Activated CD8-positive, alpha-beta T cell treated with anti-CD3 and anti-CD28 coated beads for 36 hours (primary cell): ENCODE measurements at regions of chr12 and their contacts with region 1.

Region 1: DNA sequence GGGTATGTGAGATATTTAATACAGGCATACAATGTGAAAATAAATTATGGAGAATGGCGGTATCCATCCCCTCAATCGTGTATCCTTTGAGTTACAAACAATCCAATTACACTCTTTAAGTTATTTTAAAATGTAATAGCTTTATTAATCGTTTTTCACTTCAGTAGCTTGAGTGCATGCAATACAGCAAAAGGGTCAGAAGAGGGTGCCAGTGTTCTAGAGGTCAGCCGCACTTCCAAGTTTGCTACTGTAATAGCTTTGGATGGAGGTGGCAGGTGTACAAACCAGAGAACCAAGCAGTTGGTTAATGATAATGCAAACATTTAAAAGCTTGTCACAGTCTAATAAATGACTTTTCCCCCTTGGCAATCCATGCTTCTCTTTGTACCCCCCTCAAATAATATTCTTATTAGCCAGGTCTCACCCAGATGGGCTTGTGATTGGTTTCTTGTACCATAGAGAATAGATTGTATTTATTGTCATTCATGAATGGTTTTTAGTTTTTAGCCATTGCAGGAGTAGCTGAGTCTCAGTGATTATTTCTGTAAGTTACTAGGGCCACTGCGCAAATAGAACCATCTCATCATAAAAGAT is 127.0 kb downstream of the ERC1 start:
- DNase-seq: peak; percentile 87
- ATAC-seq: peak; percentile 77
- H3K4me3 Mint-ChIP-seq: no peak overlapping the region
- H3K27ac Mint-ChIP-seq: no peak overlapping the region
- H3K4me1 Mint-ChIP-seq: peaks cover 19% of the 10 kb centered on the region
- H3K27me3 Mint-ChIP-seq: no peaks in the 10 kb centered on the region
- CTCF ChIP-seq: peak; percentile 97

Region 2: GRCh38 chr12:203462-204260 is 914.4 kb before region 1 on chr12:
- CTCF ChIA-PET with region 1: no interaction called
- POLR2A ChIA-PET with region 1: no interaction called
- intact Hi-C with region 1: no loop called
- DNase-seq: no peak
- ATAC-seq: no peak
- H3K4me3 Mint-ChIP-seq: no peak overlapping the region
- H3K27ac Mint-ChIP-seq: no peak overlapping the region
- H3K4me1 Mint-ChIP-seq: no peaks in the 10 kb centered on the region
- H3K27me3 Mint-ChIP-seq: peaks cover 35% of the 10 kb centered on the region
- CTCF ChIP-seq: no peak

Region 3: GRCh38 chr12:913919-914708 is 204.0 kb before region 1 on chr12:
- CTCF ChIA-PET with region 1: no interaction called
- POLR2A ChIA-PET with region 1: no interaction called
- intact Hi-C with region 1: no loop called
- DNase-seq: no peak
- ATAC-seq: no peak
- H3K4me3 Mint-ChIP-seq: no peak overlapping the region
- H3K27ac Mint-ChIP-seq: no peak overlapping the region
- H3K4me1 Mint-ChIP-seq: peaks cover 11% of the 10 kb centered on the region
- H3K27me3 Mint-ChIP-seq: no peaks in the 10 kb centered on the region
- CTCF ChIP-seq: no peak

Region 4: DNA sequence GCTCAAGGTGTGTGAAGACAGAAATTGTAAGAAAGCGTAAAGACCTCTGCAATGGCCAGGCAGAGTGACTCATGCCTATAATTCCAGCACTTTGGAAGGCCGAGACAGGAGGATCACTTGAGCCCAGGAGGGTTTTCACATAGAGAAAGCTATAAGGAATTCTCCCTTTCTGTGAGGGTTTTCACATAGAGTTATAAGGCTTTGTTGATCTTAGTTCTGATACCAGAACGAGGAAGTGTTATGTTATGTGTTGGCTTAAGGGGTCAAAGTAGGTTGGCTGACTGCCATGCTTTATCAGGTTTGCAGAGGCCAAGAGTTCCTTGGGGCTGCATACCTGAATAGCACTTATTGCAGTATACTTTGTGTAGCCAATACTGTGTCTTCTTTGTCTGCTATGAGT is 12.1 kb after region 1 on chr12:
- CTCF ChIA-PET with region 1: interaction called, 68 read pairs
- POLR2A ChIA-PET with region 1: no interaction called
- intact Hi-C with region 1: no loop called
- DNase-seq: peak; percentile 22
- ATAC-seq: peak; percentile 34
- H3K4me3 Mint-ChIP-seq: no peak overlapping the region
- H3K27ac Mint-ChIP-seq: no peak overlapping the region
- H3K4me1 Mint-ChIP-seq: peaks cover 39% of the 10 kb centered on the region
- H3K27me3 Mint-ChIP-seq: no peaks in the 10 kb centered on the region
- CTCF ChIP-seq: no peak

Region 5: GRCh38 chr12:1184402-1184801 is 66.3 kb after region 1 on chr12:
- CTCF ChIA-PET with region 1: interaction called, 11 read pairs
- POLR2A ChIA-PET with region 1: no interaction called
- intact Hi-C with region 1: no loop called
- DNase-seq: no peak
- ATAC-seq: no peak
- H3K4me3 Mint-ChIP-seq: no peak overlapping the region
- H3K27ac Mint-ChIP-seq: no peak overlapping the region
- H3K4me1 Mint-ChIP-seq: peaks cover 2% of the 10 kb centered on the region
- H3K27me3 Mint-ChIP-seq: no peaks in the 10 kb centered on the region
- CTCF ChIP-seq: no peak

Region 6: GRCh38 chr12:1488908-1489381 is 370.9 kb after region 1 on chr12:
- CTCF ChIA-PET with region 1: interaction called, 14 read pairs
- POLR2A ChIA-PET with region 1: no interaction called
- intact Hi-C with region 1: no loop called
- DNase-seq: peak; percentile 26
- ATAC-seq: peak; percentile 58
- H3K4me3 Mint-ChIP-seq: no peak overlapping the region
- H3K27ac Mint-ChIP-seq: peak overlapping the region; percentile 53
- H3K4me1 Mint-ChIP-seq: peaks cover 18% of the 10 kb centered on the region
- H3K27me3 Mint-ChIP-seq: no peaks in the 10 kb centered on the region
- CTCF ChIP-seq: no peak

Region 7: GRCh38 chr12:1583421-1584078 is 465.5 kb after region 1 on chr12:
- CTCF ChIA-PET with region 1: interaction called, 177 read pairs
- POLR2A ChIA-PET with region 1: interaction called, 4 read pairs
- intact Hi-C with region 1: loop called (anchors 5 kb)
- DNase-seq: peak; percentile 77
- ATAC-seq: peak; percentile 79
- H3K4me3 Mint-ChIP-seq: no peak overlapping the region
- H3K27ac Mint-ChIP-seq: no peak overlapping the region
- H3K4me1 Mint-ChIP-seq: peaks cover 21% of the 10 kb centered on the region
- H3K27me3 Mint-ChIP-seq: no peaks in the 10 kb centered on the region
- CTCF ChIP-seq: peak; percentile 97

Region 8: GRCh38 chr12:1634590-1635191 is 516.6 kb after region 1 on chr12:
- CTCF ChIA-PET with region 1: interaction called, 14 read pairs
- POLR2A ChIA-PET with region 1: no interaction called
- intact Hi-C with region 1: no loop called
- DNase-seq: peak; percentile 72
- ATAC-seq: peak; percentile 75
- H3K4me3 Mint-ChIP-seq: no peak overlapping the region
- H3K27ac Mint-ChIP-seq: no peak overlapping the region
- H3K4me1 Mint-ChIP-seq: peaks cover 10% of the 10 kb centered on the region
- H3K27me3 Mint-ChIP-seq: peaks cover 43% of the 10 kb centered on the region
- CTCF ChIP-seq: peak; percentile 81